ENCODE measurements at regions of chr6 and their contacts with region 1.

Region 1: GRCh38 chr6:11366183-11366933 is 133.9 kb upstream of the NEDD9 start:
- DNase-seq: peak; percentile 89
- ATAC-seq: peak; percentile 86
- H3K4me3 ChIP-seq: peak overlapping the region; percentile 15; the same call in 1 of the 2 replicates
- H3K27ac ChIP-seq: peak overlapping the region; percentile 78
- H3K4me1 ChIP-seq: peaks cover 64% of the 10 kb centered on the region
- H3K27me3 ChIP-seq: no peaks in the 10 kb centered on the region
- CTCF ChIP-seq: no peak
- EP300 ChIP-seq: 0 out of 4 replicates have a peak, but pooled peaks of 1 of the 2 experiments have one; percentile 12
- POLR2A ChIP-seq: peak; percentile 45; the same call in 1 of the 2 replicates
- RAD21 ChIP-seq: no peak

Region 2: DNA sequence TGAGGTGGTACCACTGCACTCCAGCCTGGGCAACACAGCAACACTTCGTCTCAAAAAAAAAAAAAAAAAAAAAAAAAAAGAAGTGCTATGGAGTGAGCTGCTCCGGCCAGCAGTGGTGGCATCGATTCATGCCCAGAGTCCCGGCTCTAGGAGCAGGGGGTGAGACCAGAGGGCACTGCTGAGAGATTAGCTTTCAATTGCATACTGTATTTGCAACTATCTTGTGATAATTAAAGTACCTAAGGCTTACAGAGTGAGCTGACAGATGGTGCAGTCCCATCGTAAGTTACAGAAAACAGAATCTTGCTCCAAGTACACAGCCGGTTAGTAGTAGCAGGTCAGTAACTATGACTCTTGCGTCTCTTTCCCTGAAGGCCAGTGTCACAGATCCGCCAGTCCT is 587.3 kb before region 1 on chr6:
- CTCF ChIA-PET with region 1: no interaction called
- POLR2A ChIA-PET with region 1: no interaction called
- RAD21 ChIA-PET with region 1: no interaction called
- SMC1A ChIA-PET with region 1: no interaction called
- in situ Hi-C with region 1: no loop called
- intact Hi-C with region 1: no loop called
- DNase-seq: no peak
- ATAC-seq: no peak
- H3K4me3 ChIP-seq: no peak overlapping the region
- H3K27ac ChIP-seq: no peak overlapping the region
- H3K4me1 ChIP-seq: no peaks in the 10 kb centered on the region
- H3K27me3 ChIP-seq: no peaks in the 10 kb centered on the region
- CTCF ChIP-seq: no peak
- EP300 ChIP-seq: no peak
- POLR2A ChIP-seq: no peak
- RAD21 ChIP-seq: no peak

Region 3: GRCh38 chr6:11317885-11318771 is 48.2 kb before region 1 on chr6:
- CTCF ChIA-PET with region 1: interaction called, 3 read pairs
- POLR2A ChIA-PET with region 1: interaction called, 12 read pairs
- RAD21 ChIA-PET with region 1: interaction called, 33 read pairs
- SMC1A ChIA-PET with region 1: interaction called, 129 read pairs
- in situ Hi-C with region 1: no loop called
- intact Hi-C with region 1: no loop called
- DNase-seq: no peak
- ATAC-seq: peak; percentile 83
- H3K4me3 ChIP-seq: no peak overlapping the region
- H3K27ac ChIP-seq: peak overlapping the region; percentile 16; the same call in 1 of the 2 replicates
- H3K4me1 ChIP-seq: peaks cover 17% of the 10 kb centered on the region
- H3K27me3 ChIP-seq: no peaks in the 10 kb centered on the region
- CTCF ChIP-seq: no peak
- EP300 ChIP-seq: peak; percentile 9 to 69; a peak in 1 of 4 replicates
- POLR2A ChIP-seq: no peak
- RAD21 ChIP-seq: 0 out of 2 replicates have a peak, but pooled peaks have one; percentile 10

Region 4: DNA sequence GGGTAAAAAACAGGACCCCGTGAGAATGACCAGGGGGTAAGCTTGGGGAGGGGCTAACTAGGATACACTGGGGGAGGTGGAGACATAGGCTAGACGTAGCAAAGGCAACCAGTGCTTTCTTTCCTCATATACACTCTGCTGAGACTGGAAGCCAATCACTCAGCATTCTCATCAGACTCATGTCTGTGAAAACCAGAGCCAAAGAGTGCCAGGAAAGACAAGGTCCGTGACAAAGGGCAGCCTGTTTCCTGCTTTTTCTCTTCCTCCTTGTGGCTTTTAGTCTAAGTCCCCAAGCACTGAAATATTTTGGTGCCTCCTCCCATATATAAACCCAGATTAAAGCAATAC is 36.0 kb before region 1 on chr6:
- CTCF ChIA-PET with region 1: interaction called, 3 read pairs
- POLR2A ChIA-PET with region 1: interaction called, 5 read pairs
- RAD21 ChIA-PET with region 1: interaction called, 32 read pairs
- SMC1A ChIA-PET with region 1: interaction called, 129 read pairs
- in situ Hi-C with region 1: no loop called
- intact Hi-C with region 1: no loop called
- DNase-seq: no peak
- ATAC-seq: peak; percentile 35; the same call in 2 of the 3 replicates
- H3K4me3 ChIP-seq: no peak overlapping the region
- H3K27ac ChIP-seq: peak overlapping the region; percentile 58
- H3K4me1 ChIP-seq: peaks cover 35% of the 10 kb centered on the region
- H3K27me3 ChIP-seq: no peaks in the 10 kb centered on the region
- CTCF ChIP-seq: no peak
- EP300 ChIP-seq: no peak
- POLR2A ChIP-seq: no peak
- RAD21 ChIP-seq: no peak

Region 5: DNA sequence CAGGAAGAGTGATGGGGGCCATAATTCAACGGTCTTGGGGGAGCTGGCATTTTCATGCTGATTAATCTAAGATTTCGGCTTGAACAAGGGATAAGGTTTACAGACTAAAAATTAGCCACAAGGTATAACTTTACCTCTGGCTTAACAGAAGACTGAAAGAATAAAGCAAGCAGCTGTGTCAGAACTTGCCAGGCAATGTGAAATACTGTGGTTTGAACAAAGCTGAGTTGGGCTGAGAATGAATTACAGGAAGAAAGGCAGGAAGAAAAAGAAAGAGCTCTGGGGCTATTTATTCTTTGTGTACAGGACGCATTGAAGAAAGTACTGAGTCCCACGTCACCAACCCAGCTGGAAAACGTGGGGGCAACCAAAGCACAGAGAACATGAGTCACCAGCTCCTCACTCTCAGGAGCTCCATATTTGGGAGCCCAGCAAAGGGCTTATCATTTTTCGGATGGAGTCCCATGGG is 12.4 kb before region 1 on chr6:
- CTCF ChIA-PET with region 1: interaction called, 25 read pairs
- POLR2A ChIA-PET with region 1: interaction called, 6 read pairs
- RAD21 ChIA-PET with region 1: interaction called, 114 read pairs
- SMC1A ChIA-PET with region 1: interaction called, 59 read pairs
- in situ Hi-C with region 1: no loop called
- intact Hi-C with region 1: no loop called
- DNase-seq: no peak
- ATAC-seq: peak; percentile 85
- H3K4me3 ChIP-seq: no peak overlapping the region
- H3K27ac ChIP-seq: peak overlapping the region; percentile 43
- H3K4me1 ChIP-seq: peaks cover 13% of the 10 kb centered on the region
- H3K27me3 ChIP-seq: no peaks in the 10 kb centered on the region
- CTCF ChIP-seq: no peak
- EP300 ChIP-seq: no peak
- POLR2A ChIP-seq: no peak
- RAD21 ChIP-seq: no peak

Region 6: DNA sequence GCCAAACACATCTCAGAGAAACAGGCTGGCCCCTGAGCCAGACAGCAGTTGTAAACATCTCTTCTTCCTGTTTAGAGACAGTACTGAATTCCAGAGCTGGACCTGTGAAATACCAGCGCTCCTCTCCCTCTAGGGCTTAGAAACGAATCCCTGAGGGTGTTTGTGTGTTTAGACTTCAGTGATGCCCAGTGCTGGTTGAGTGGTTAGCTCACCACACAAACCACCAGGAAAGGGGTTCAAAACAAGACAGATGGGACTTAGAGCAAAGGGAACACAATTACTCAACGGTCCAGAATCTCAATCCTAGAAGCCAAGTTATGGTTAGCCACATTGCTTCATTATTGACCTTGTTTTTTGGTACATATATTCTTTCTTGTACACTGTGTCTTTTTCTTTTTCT is 62.5 kb after region 1 on chr6:
- CTCF ChIA-PET with region 1: no interaction called
- POLR2A ChIA-PET with region 1: no interaction called
- RAD21 ChIA-PET with region 1: interaction called, 11 read pairs
- SMC1A ChIA-PET with region 1: interaction called, 8 read pairs
- in situ Hi-C with region 1: no loop called
- intact Hi-C with region 1: no loop called
- DNase-seq: peak; percentile 83
- ATAC-seq: peak; percentile 81
- H3K4me3 ChIP-seq: no peak overlapping the region
- H3K27ac ChIP-seq: peak overlapping the region; percentile 51; the same call in 1 of the 2 replicates
- H3K4me1 ChIP-seq: peaks cover 33% of the 10 kb centered on the region
- H3K27me3 ChIP-seq: no peaks in the 10 kb centered on the region
- CTCF ChIP-seq: no peak
- EP300 ChIP-seq: peak in 1 of 2 experiments; percentile 65; a peak in 2 of 4 replicates
- POLR2A ChIP-seq: no peak
- RAD21 ChIP-seq: no peak